Activated B cell treated with CpG ODN at 0.5 μM for 24 hours (primary cell): ENCODE measurements at regions of chr6 and their contacts with region 1.

Region 1: GRCh38 chr6:33248925-33249731 is 22.5 kb downstream of the VPS52 start:
- DNase-seq: peak; percentile 86
- ATAC-seq: peak; percentile 84
- H3K4me3 Mint-ChIP-seq: peak overlapping the region; percentile 91
- H3K27ac Mint-ChIP-seq: peak overlapping the region; percentile 91
- H3K4me1 Mint-ChIP-seq: peaks cover 28% of the 10 kb centered on the region
- H3K27me3 Mint-ChIP-seq: no peaks in the 10 kb centered on the region
- CTCF ChIP-seq: no peak

Region 2: GRCh38 chr6:32885698-32886286 is 363.3 kb before region 1 on chr6:
- CTCF ChIA-PET with region 1: no interaction called
- POLR2A ChIA-PET with region 1: interaction called, 3 read pairs
- intact Hi-C with region 1: loop called (anchors 2 kb)
- DNase-seq: no peak
- ATAC-seq: peak; percentile 68
- H3K4me3 Mint-ChIP-seq: no peak overlapping the region
- H3K27ac Mint-ChIP-seq: no peak overlapping the region
- H3K4me1 Mint-ChIP-seq: peaks cover 27% of the 10 kb centered on the region
- H3K27me3 Mint-ChIP-seq: no peaks in the 10 kb centered on the region
- CTCF ChIP-seq: no peak

Region 3: GRCh38 chr6:33014841-33015634 is 234.1 kb before region 1 on chr6:
- CTCF ChIA-PET with region 1: interaction called, 29 read pairs
- POLR2A ChIA-PET with region 1: interaction called, 27 read pairs
- intact Hi-C with region 1: loop called (anchors 1 kb)
- DNase-seq: no peak
- ATAC-seq: peak; percentile 34
- H3K4me3 Mint-ChIP-seq: peak overlapping the region; percentile 71
- H3K27ac Mint-ChIP-seq: peak overlapping the region; percentile 98
- H3K4me1 Mint-ChIP-seq: peaks cover 69% of the 10 kb centered on the region
- H3K27me3 Mint-ChIP-seq: no peaks in the 10 kb centered on the region
- CTCF ChIP-seq: no peak

Region 4: DNA sequence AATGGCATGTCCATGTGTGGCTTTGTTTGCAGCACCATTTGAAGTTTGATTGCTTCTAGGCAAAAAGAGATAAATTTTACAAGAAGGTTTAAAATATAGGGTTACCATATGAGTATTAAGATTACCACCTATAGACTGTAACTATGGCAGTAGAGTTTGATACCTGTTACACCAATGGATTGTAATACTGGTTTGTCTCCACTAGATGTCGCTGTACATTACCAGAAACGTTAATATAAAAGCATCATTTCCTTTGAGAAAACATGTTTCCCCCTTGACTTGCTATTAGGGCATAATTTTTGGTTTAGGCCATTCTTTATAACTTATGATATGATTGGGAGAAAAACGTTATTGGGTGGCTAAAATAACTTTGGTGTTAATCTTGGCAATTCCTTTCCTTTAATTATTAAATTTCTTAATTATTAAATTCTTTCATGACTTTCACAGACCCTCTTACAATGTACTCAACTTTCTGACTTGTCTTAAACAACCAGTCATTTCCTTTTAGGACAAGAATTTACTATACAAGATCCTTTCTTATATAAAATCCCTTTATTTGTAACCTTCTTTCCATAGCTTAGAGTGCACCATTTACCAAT is 130.5 kb before region 1 on chr6:
- CTCF ChIA-PET with region 1: interaction called, 12 read pairs
- POLR2A ChIA-PET with region 1: interaction called, 7 read pairs
- intact Hi-C with region 1: loop called (anchors 1 kb)
- DNase-seq: no peak
- ATAC-seq: peak; percentile 48
- H3K4me3 Mint-ChIP-seq: no peak overlapping the region
- H3K27ac Mint-ChIP-seq: no peak overlapping the region
- H3K4me1 Mint-ChIP-seq: peaks cover 51% of the 10 kb centered on the region
- H3K27me3 Mint-ChIP-seq: peaks cover 9% of the 10 kb centered on the region
- CTCF ChIP-seq: peak; percentile 14

Region 5: DNA sequence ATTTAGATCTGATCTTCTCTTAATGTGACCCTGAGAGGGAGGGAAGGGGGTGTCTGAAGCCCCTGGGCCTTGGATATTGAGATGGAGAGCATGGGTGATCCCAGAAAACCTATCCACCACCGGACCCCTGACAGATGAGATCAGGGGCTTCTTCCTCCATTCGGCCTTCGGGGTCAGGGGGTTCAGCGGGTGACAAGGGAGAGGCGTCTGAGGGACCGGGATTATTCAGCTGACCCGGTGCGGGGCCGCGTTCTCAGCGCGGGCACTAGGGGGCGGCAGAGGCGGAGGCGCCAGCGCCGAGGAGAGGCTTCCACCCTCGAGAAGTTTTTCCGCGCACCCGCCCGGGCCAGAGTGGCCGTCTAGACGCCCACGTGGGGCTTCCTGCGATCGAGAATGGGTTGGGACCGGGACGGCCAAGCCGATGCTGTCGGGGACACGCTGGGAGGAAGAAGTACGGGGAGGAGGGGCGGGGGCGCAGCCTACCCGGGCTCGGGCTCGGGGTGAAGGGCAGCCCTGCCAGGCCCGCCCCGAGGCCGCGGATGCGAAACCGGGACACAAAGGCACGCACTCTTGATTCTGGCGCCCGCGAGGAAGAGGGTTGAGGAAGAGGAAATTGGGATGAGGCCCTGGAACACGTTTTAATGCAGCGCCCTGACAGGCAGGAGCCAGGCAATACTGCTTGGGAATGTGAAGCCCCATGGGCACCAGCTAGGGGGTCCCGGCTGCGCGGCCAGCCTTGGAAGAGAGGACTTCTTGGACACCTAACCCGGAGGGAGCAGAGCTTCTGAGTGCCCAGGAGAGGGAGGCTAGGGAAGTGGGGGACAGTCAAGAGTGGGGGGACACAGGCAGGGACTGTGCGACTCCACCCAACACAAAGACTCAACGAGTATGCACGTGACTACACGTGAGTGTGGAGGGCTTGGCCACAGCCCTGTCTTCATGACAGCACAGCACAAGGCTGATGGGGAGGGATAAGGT is 87.5 kb before region 1 on chr6:
- CTCF ChIA-PET with region 1: interaction called, 21 read pairs
- POLR2A ChIA-PET with region 1: interaction called, 14 read pairs
- intact Hi-C with region 1: loop called (anchors 1 kb)
- DNase-seq: peak; percentile 84
- ATAC-seq: peak; percentile 98
- H3K4me3 Mint-ChIP-seq: peak overlapping the region; percentile 92
- H3K27ac Mint-ChIP-seq: peak overlapping the region; percentile 65
- H3K4me1 Mint-ChIP-seq: peaks cover 13% of the 10 kb centered on the region
- H3K27me3 Mint-ChIP-seq: peaks cover 1% of the 10 kb centered on the region
- CTCF ChIP-seq: peak; percentile 47

Region 6: GRCh38 chr6:33271458-33272274 is 22.5 kb after region 1 on chr6 and contains the starts of genes RPS18 and VPS52:
- CTCF ChIA-PET with region 1: interaction called, 8 read pairs
- POLR2A ChIA-PET with region 1: interaction called, 55 read pairs
- intact Hi-C with region 1: loop called (anchors 1 kb)
- DNase-seq: peak; percentile 79
- ATAC-seq: peak; percentile 84
- H3K4me3 Mint-ChIP-seq: peak within 1 kb of the TSS; percentile 100
- H3K27ac Mint-ChIP-seq: peak within 1 kb of the TSS; percentile 100
- H3K4me1 Mint-ChIP-seq: peaks cover 59% of the 10 kb centered on the region
- H3K27me3 Mint-ChIP-seq: no peaks in the 10 kb centered on the region
- CTCF ChIP-seq: no peak
- total RNA-seq, gene RPS18: 4,710 and 5,877 TPM in 2 replicates
- total RNA-seq, gene VPS52: 82.0 and 97.2 TPM in 2 replicates

Region 7: DNA sequence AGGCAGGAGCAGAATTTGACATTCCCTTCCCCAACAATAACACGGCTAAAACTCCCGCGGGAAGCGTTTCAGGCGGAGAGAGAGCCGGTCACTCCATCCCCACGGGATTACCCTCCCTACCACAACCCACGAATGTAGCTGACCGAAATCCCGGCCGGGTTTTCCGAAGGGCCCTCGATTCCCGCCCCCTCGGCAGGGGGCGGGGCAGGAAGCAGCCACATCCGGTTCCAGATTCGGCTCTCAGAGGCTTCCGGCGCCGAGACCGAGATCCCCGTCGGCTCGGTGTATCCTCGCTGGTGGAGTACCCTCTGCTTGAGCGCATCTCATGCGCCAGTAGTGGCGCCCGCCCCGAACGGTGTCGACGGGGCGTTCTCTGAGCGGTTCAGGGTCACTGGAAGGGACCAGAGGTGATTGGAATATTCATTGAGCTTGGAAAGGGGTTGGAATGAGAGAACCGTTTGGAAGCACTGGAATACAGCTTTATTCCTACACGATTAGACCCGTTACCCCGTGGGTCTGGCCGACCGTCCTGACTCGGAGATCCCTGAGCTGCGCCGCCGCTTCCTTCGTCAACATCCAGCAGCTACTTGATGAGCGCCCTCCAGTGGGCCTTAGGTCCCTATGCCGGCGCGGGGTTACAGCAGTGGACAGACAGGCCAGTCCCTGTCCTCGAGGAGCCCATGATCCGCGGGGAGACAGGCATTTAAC is 50.3 kb after region 1 on chr6:
- CTCF ChIA-PET with region 1: no interaction called
- POLR2A ChIA-PET with region 1: interaction called, 14 read pairs
- intact Hi-C with region 1: loop called (anchors 1 kb)
- DNase-seq: peak; percentile 90
- ATAC-seq: peak; percentile 67
- H3K4me3 Mint-ChIP-seq: peak overlapping the region; percentile 96
- H3K27ac Mint-ChIP-seq: peak overlapping the region; percentile 98
- H3K4me1 Mint-ChIP-seq: peaks cover 34% of the 10 kb centered on the region
- H3K27me3 Mint-ChIP-seq: no peaks in the 10 kb centered on the region
- CTCF ChIP-seq: no peak